PC-9 (cell line): ENCODE measurements at regions of chr17 and their contacts with region 1.

Region 1: DNA sequence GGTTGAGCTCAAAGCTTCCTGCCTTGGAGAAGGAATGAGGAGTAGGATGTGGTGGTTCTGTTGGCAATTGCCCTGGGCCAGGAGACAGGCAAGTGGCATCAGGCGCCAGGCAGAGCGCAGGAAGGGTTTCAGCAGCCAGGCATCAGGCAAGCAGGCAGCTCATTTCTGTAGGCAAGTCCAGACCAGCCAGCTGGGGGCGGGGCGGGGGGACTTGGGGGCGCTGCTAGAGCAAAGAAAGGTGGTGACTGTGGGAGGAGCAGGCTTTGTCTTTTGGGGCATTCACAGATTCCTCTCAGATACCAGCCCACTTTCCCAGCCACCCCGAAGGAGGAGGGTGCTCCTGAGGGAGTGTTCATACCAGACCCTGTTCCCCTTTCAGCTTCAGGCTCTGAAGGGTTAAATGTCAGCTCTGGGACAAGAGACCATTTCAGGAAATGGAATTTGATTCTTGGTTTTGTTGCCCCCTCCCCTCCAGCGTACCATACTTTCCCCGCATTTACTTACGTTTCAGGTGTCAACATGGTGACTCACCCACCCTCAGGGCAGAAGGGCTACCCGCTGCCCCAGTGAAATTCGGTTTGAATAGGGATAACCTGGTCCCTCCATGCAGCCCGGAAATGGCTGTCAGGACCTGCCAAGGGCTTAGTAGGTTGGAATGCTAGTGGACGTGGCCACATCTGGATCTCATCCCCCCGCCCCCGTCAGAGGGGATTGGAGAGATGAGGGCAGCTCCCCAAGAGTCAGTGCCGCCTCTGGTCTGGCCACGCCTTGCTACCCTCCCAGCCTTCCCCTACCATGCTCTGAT is 13.2 kb downstream of the NGFR start:
- DNase-seq: peak; percentile 95 to 96
- H3K4me3 ChIP-seq: peak overlapping the region; percentile 35; the same call in 1 of the 2 replicates
- H3K27ac ChIP-seq: no peak overlapping the region
- H3K4me1 ChIP-seq: peaks cover 25% of the 10 kb centered on the region
- H3K27me3 ChIP-seq: peaks cover 17% of the 10 kb centered on the region; the same call in 1 of the 2 replicates
- CTCF ChIP-seq: no peak

Region 2: DNA sequence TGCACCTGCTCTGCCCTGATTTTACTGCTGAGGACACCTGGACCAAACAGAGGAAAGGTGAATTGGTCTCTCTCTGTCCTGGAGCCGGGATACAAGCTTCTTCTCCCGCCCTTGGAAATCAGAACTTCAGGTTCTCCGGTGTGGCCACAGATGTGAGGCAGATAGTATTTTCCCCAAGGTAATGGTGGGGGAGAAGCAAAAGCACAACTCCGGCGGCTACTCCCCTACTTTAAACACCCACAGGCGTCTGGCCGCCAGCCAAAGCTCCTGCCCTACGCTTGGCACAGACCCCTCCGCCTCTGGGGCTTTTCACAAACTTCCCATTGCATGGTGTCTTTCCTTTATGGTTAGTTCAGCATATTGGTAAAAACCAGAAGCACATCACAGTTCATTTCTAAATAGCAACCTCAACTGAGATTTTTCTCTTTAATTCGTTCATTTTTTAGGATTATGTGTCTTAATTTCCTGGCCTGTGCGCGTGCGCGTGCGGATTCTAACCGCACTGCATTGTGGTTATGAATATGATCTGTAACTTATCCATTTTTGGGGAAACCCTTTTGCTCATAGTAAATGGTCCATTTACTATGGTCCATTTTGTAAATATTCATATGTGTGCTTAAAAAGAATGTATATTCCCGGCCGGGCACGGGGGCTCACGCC is 415.1 kb before region 1 on chr17:
- CTCF ChIA-PET with region 1: interaction called, 10 read pairs
- POLR2A ChIA-PET with region 1: no interaction called
- intact Hi-C with region 1: no loop called
- DNase-seq: peak in 1 of 2 experiments; percentile 37
- H3K4me3 ChIP-seq: no peak overlapping the region
- H3K27ac ChIP-seq: no peak overlapping the region
- H3K4me1 ChIP-seq: no peaks in the 10 kb centered on the region
- H3K27me3 ChIP-seq: no peaks in the 10 kb centered on the region
- CTCF ChIP-seq: no peak

Region 3: GRCh38 chr17:49402706-49403105 is 105.6 kb before region 1 on chr17:
- CTCF ChIA-PET with region 1: interaction called, 15 read pairs
- POLR2A ChIA-PET with region 1: no interaction called
- intact Hi-C with region 1: no loop called
- DNase-seq: no peak
- H3K4me3 ChIP-seq: no peak overlapping the region
- H3K27ac ChIP-seq: no peak overlapping the region
- H3K4me1 ChIP-seq: no peaks in the 10 kb centered on the region
- H3K27me3 ChIP-seq: no peaks in the 10 kb centered on the region
- CTCF ChIP-seq: no peak

Region 4: DNA sequence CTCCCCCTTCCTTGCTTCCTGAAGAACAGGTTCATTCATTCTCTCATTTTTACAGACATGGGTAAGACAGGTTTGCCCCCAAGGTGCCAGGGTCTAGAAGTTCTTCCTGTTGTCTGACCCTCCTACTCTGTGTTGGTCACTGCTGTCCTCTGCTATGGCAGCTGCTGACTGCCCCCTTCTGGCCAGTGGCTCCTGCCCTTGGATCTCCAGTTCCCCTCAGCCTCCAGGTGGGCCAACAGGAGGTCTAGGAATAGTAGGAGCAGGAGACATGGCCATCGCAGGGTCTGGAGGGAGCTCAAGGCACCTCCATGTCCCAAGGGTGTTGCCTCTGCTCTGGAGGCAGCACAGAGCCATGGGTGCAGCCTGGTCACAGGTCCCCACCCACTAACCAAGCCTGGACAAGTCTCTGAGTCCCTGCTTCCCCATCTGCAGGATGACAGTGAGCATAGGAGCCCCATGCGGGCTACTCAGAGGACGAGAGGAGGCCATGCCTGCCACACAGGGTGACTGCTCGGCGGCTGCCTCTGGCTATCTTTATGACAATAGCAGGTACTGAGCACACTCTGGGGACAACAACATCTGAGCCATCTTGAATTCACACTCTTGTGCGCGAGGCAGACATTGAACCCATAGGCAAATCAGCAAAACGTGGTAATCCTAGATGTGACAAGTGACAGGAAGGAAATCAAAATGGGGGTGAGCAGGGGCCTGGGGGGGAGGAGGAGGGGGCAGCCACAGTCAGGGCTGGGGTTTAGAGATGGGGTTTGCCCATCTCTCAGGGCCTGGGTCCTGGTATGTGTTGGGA is 40.4 kb after region 1 on chr17:
- CTCF ChIA-PET with region 1: interaction called, 10 read pairs
- POLR2A ChIA-PET with region 1: no interaction called
- intact Hi-C with region 1: no loop called
- DNase-seq: peak in 1 of 2 experiments; percentile 53
- H3K4me3 ChIP-seq: no peak overlapping the region
- H3K27ac ChIP-seq: no peak overlapping the region
- H3K4me1 ChIP-seq: no peaks in the 10 kb centered on the region
- H3K27me3 ChIP-seq: peaks cover 10% of the 10 kb centered on the region; the same call in 1 of the 2 replicates
- CTCF ChIP-seq: peak; percentile 79